Activated CD8-positive, alpha-beta T cell treated with anti-CD3 and anti-CD28 coated beads, Interleukin-2, amount 10 ng/mL, durations not matched to agents 7 days and 5 days (primary cell): ENCODE measurements at regions of chr1 and their contacts with region 1.

Region 1: GRCh38 chr1:89310505-89310904 is 37.8 kb upstream of the GBP5 start:
- DNase-seq: no peak
- ATAC-seq: peak; percentile 78
- H3K4me3 Mint-ChIP-seq: peak overlapping the region; percentile 60
- H3K27ac Mint-ChIP-seq: peak overlapping the region; percentile 93
- H3K4me1 Mint-ChIP-seq: peaks cover 57% of the 10 kb centered on the region
- H3K27me3 Mint-ChIP-seq: no peaks in the 10 kb centered on the region

Region 2: DNA sequence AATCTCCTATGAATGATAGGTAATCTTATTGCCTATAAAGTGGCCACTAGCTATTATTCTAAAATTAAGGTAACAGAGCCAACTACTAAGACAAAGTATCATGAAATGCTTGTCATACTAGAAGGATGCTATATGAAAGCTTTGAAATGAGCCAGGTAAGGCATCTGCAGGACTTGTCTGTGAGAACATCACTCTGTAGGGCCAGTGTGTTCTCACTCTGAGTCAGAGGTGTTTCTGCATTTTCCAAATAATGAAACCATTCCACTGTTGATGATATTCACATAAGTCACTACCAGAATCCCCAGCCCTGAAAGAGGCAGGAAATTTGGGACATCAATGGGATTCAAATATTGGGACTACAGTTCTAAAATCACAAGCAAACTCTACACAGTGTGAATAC is 12.0 kb before region 1 on chr1:
- CTCF ChIA-PET with region 1: interaction called, 23 read pairs
- POLR2A ChIA-PET with region 1: interaction called, 8 read pairs
- DNase-seq: no peak
- ATAC-seq: no peak
- H3K4me3 Mint-ChIP-seq: no peak overlapping the region
- H3K27ac Mint-ChIP-seq: no peak overlapping the region
- H3K4me1 Mint-ChIP-seq: peaks cover 61% of the 10 kb centered on the region
- H3K27me3 Mint-ChIP-seq: no peaks in the 10 kb centered on the region